Caco-2 (cell line): ENCODE measurements at regions of chr17 and their contacts with region 1.

Region 1: GRCh38 chr17:28552246-28552999 is at the start of gene UNC119:
- DNase-seq: peak; percentile 75 to 88
- H3K4me3 ChIP-seq: peak within 1 kb of the TSS; percentile 94
- H3K4me3 Mint-ChIP-seq: peak within 1 kb of the TSS; percentile 81
- H3K27ac Mint-ChIP-seq: peak within 1 kb of the TSS; percentile 74
- H3K4me1 ChIP-seq: peaks cover 26% of the 10 kb centered on the region
- H3K4me1 Mint-ChIP-seq: peaks cover 31% of the 10 kb centered on the region
- H3K27me3 ChIP-seq: no peaks in the 10 kb centered on the region
- H3K27me3 Mint-ChIP-seq: no peaks in the 10 kb centered on the region
- CTCF ChIP-seq: no peak
- total RNA-seq, gene UNC119: 40.5 and 41.3 TPM in 2 replicates

Region 2: DNA sequence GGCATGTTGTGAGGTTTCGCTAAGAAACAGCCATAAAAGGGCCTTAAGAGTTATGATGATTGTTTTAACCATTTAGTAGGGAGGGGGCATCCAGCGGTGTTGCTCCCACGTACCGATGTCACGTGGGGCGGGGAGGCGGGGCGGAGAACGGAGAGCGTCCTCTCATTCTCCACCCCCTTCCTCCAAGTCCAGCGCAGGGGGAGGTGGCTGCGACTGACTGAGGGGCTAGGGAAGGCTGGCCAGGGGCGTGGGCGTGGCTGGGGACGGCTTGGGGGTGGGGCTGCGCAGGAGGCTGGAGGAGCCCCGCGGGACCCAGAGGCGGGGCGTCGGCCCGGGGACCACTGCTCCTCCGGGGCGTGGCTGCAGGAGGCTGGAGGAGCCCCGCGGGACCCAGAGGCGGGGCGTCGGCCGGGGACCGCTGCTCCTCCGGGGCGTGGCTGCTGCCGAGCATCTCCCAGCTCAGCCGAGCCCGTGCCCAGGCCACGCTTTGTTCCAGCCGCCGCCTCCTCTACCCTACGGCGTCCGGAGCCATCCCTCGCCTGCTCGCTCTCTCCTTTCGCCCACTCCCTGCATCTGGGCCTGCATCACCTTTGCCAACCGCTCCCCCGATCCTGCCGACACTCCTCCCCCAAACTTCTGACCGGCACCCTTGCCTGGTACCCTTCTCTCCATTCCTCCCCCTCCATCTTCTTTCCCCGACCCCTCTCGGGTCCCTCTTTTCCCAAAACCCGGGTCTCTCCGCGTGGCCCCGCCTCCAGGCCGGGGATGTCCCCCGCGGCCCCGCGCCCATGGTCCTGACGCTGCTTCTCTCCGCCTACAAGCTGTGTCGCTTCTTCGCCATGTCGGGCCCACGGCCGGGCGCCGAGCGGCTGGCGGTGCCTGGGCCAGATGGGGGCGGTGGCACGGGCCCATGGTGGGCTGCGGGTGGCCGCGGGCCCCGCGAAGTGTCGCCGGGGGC is 180.9 kb before region 1 on chr17 and contains the start of gene SARM1:
- CTCF ChIA-PET with region 1: interaction called, 7 read pairs
- POLR2A ChIA-PET with region 1: no interaction called
- intact Hi-C with region 1: loop called (anchors 10 kb)
- DNase-seq: peak; percentile 99 to 100
- H3K4me3 ChIP-seq: peak within 1 kb of the TSS; percentile 40
- H3K4me3 Mint-ChIP-seq: peak within 1 kb of the TSS; percentile 75
- H3K27ac Mint-ChIP-seq: peak within 1 kb of the TSS; percentile 88
- H3K4me1 ChIP-seq: peaks cover 46% of the 10 kb centered on the region
- H3K4me1 Mint-ChIP-seq: peaks cover 54% of the 10 kb centered on the region
- H3K27me3 ChIP-seq: no peaks in the 10 kb centered on the region
- H3K27me3 Mint-ChIP-seq: no peaks in the 10 kb centered on the region
- CTCF ChIP-seq: no peak
- total RNA-seq, gene SARM1: 32.8 and 34.4 TPM in 2 replicates

Region 3: GRCh38 chr17:28446728-28447395 is 105.6 kb before region 1 on chr17:
- CTCF ChIA-PET with region 1: no interaction called
- POLR2A ChIA-PET with region 1: no interaction called
- intact Hi-C with region 1: loop called (anchors 10 kb)
- DNase-seq: no peak
- H3K4me3 ChIP-seq: no peak overlapping the region
- H3K4me3 Mint-ChIP-seq: no peak overlapping the region
- H3K27ac Mint-ChIP-seq: no peak overlapping the region
- H3K4me1 ChIP-seq: peaks cover 10% of the 10 kb centered on the region
- H3K4me1 Mint-ChIP-seq: peaks cover 4% of the 10 kb centered on the region
- H3K27me3 ChIP-seq: no peaks in the 10 kb centered on the region
- H3K27me3 Mint-ChIP-seq: peaks cover 9% of the 10 kb centered on the region
- CTCF ChIP-seq: no peak

Region 4: DNA sequence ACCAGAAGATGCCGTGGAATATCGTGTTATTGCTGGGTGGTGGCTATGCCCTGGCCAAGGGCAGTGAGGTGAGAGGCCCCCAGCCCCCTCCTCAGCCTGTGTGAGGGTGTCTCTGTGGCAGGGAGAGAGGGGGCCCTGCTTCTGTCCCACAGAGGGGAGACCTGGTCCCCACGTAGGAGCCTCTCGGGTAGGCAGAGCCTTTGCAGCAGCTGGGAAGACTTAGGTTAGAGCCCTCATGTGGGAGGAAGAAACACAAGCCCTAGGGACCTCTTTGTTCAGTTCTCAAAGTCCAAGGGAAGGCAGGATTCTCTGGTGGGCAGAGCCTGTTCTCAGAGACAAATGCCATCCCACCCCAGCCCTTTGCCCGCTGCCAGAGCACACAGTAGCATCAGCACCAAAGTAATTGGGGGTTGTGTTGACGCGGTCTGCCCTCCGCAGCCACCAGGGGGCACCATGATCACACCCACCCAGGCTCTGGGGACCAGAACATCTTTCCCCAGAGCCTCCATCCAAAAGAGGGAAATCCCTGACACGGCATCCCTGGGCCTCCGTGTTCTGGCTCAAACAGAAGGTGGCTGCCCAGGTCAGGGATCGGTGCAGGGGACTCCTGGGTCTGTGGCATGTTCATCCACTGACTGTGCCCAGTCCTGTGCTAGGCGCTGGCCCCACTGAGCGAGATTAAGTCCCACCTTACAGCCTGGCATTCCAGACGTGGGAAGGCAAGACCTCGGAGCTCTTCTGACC is 57.8 kb before region 1 on chr17:
- CTCF ChIA-PET with region 1: no interaction called
- POLR2A ChIA-PET with region 1: no interaction called
- intact Hi-C with region 1: loop called (anchors 2 kb)
- DNase-seq: peak; percentile 78 to 88
- H3K4me3 ChIP-seq: no peak overlapping the region
- H3K4me3 Mint-ChIP-seq: no peak overlapping the region
- H3K27ac Mint-ChIP-seq: no peak overlapping the region
- H3K4me1 ChIP-seq: peaks cover 6% of the 10 kb centered on the region; the same call in 1 of the 2 replicates
- H3K4me1 Mint-ChIP-seq: peaks cover 7% of the 10 kb centered on the region
- H3K27me3 ChIP-seq: no peaks in the 10 kb centered on the region
- H3K27me3 Mint-ChIP-seq: no peaks in the 10 kb centered on the region
- CTCF ChIP-seq: peak; percentile 92 to 97

Region 5: DNA sequence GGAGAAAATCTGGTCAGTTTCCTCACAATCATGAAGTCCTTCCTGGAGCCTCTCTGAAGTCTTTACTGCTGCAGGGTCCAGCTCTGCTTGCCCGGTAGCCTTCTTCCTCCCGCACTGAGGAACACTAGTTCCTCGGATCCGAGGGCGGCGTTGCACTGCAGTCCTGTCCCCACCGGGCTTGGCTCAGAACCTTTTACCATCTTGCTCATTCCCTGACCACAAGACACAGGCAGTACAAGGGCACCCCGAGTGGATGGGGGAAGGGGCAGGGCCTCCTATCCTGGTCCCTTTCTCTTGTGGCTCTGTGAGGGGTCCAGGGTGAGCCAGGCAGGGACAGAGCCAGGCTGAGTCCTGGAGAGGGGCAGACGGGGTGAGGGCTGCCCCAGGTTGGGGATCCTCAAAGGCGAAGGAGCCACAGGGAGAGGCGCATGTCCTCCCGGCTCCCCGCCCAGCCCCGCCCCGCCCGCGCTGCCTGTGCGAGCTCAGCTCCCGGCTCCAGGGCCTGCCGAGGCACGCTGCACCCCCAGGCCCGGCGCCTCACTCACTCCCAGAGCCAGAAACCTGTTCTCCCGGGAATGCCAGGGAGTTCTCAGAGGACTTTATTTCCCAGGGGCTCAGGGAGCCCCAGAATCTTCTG is 44.7 kb before region 1 on chr17:
- CTCF ChIA-PET with region 1: no interaction called
- POLR2A ChIA-PET with region 1: no interaction called
- intact Hi-C with region 1: no loop called
- DNase-seq: no peak
- H3K4me3 ChIP-seq: no peak overlapping the region
- H3K4me3 Mint-ChIP-seq: no peak overlapping the region
- H3K27ac Mint-ChIP-seq: no peak overlapping the region
- H3K4me1 ChIP-seq: no peaks in the 10 kb centered on the region
- H3K4me1 Mint-ChIP-seq: no peaks in the 10 kb centered on the region
- H3K27me3 ChIP-seq: no peaks in the 10 kb centered on the region
- H3K27me3 Mint-ChIP-seq: no peaks in the 10 kb centered on the region
- CTCF ChIP-seq: no peak

Region 6: DNA sequence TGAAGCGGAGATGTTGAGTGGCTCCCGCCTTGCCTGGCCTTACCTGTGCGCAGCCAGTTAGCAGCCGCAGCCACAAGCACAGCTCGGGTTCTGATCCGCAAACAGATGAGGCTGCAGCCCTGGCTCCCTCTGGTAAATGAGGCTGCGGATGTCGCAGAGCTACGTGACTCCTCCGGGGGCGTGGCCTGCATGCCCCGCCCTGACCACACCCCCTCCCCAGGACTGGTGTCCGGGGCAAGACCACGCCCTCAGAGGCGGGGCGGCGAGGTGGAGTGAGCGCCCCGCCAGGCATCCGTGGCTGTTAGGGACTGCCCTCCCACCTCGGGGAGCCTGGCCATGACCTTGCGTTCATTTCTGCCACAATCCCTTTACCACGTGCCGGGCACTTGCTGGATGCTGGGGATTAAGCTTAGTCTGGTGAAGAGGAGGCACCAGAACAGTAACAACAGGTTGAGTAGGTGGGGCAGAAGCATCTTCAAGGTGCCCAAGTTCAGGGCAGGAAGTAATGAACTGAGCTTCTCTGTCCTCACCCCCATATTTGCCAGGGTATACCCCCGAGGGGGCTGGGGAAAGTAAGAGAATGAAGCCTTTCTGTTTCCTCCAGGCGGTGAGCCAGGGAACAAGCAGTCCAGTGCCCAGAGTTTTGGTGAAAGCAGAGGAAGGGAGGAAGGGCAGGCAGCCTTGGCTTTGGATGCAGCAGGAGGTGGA is 24.5 kb after region 1 on chr17 and contains the start of gene ALDOC:
- CTCF ChIA-PET with region 1: interaction called, 6 read pairs
- POLR2A ChIA-PET with region 1: interaction called, 4 read pairs
- intact Hi-C with region 1: loop called (anchors 2 kb)
- DNase-seq: peak; percentile 96 to 97
- H3K4me3 ChIP-seq: peak within 1 kb of the TSS; percentile 34
- H3K4me3 Mint-ChIP-seq: peak within 1 kb of the TSS; percentile 61
- H3K27ac Mint-ChIP-seq: peak within 1 kb of the TSS; percentile 40
- H3K4me1 ChIP-seq: peaks cover 23% of the 10 kb centered on the region
- H3K4me1 Mint-ChIP-seq: peaks cover 20% of the 10 kb centered on the region
- H3K27me3 ChIP-seq: no peaks in the 10 kb centered on the region
- H3K27me3 Mint-ChIP-seq: no peaks in the 10 kb centered on the region
- CTCF ChIP-seq: no peak
- total RNA-seq, gene ALDOC: 16.3 and 17.7 TPM in 2 replicates

Region 7: DNA sequence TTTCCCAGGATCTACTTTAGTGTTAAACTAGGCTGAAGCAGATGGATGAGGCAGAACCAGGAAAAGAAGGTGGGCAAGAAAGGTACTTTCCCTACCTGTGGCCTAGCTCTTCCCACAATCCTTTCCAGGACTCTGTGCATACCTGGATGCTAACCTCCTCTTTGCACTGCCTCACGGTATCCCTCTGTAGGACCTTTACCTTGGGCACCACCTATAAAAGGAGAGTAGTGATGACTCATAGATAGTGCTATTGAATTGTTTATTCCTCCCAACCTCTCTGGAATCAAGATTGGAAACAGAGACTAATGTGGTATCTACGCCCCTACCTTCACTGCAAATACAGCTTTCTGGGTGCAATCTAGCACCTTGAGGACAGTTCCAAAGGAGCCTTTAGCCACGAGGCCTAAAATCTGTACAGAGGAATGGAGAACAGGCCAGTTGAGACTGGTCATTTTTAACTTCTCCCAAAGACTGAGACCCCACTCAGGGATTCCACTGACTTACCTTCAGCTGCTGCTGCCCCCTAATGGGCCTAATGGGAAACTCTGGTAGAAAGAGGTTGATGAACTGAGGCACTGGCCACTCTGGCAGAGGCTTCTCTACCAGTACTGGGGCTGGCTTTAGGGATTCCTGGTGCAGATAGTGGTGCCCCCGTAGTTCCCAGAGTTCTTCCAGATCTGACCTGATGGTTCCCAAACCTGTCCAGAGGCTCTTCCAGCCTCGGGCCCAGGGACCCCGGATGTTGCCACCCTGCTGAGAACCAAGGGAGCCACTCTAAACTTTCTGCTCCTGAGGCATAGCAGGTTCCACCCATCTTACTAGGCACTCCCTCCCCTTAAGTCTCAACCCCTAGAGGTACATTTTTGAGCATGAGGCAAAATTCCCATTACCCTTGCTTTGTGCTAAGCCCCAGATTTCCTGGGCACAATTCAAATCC is 60.8 kb after region 1 on chr17:
- CTCF ChIA-PET with region 1: interaction called, 3 read pairs
- POLR2A ChIA-PET with region 1: no interaction called
- intact Hi-C with region 1: loop called (anchors 2 kb)
- DNase-seq: peak; percentile 50 to 66
- H3K4me3 ChIP-seq: no peak overlapping the region
- H3K4me3 Mint-ChIP-seq: no peak overlapping the region
- H3K27ac Mint-ChIP-seq: peak overlapping the region; percentile 19
- H3K4me1 ChIP-seq: no peaks in the 10 kb centered on the region
- H3K4me1 Mint-ChIP-seq: peaks cover 9% of the 10 kb centered on the region
- H3K27me3 ChIP-seq: no peaks in the 10 kb centered on the region
- H3K27me3 Mint-ChIP-seq: no peaks in the 10 kb centered on the region
- CTCF ChIP-seq: peak; percentile 73 to 80

Region 8: DNA sequence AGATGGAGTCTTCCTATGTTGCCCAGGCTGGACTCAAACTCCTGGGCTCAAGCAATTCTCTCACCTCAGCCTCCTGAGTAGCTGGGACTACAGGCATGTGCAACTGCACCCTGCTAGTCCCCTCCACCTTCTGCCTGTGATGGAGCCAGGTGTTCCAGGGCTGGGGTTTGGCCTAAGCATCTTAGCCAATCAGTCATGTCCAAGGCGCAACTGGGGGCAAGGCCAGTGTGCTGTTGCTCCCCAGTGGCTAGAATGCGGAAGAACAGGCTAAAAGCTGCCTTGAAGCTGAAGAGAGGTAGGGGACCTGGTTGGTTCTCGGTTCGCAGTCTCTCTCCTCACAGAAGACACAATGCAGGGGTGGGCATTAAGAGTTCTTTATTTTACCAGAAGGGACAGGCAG is 326.6 kb after region 1 on chr17:
- CTCF ChIA-PET with region 1: no interaction called
- POLR2A ChIA-PET with region 1: no interaction called
- intact Hi-C with region 1: no loop called
- DNase-seq: peak; percentile 79 to 82
- H3K4me3 ChIP-seq: no peak overlapping the region
- H3K4me3 Mint-ChIP-seq: no peak overlapping the region
- H3K27ac Mint-ChIP-seq: peak overlapping the region; percentile 30
- H3K4me1 ChIP-seq: 0 out of 2 replicates have a peak, but pooled peaks cover 6% of the 10 kb centered on the region
- H3K4me1 Mint-ChIP-seq: peaks cover 16% of the 10 kb centered on the region
- H3K27me3 ChIP-seq: no peaks in the 10 kb centered on the region
- H3K27me3 Mint-ChIP-seq: no peaks in the 10 kb centered on the region
- CTCF ChIP-seq: peak; percentile 73 to 85